ENCODE measurements at regions of chr11 and their contacts with region 1.

Region 1: GRCh38 chr11:4187055-4187988 is 92.7 kb downstream of the RRM1 start:
- DNase-seq: peak; percentile 80
- H3K4me3 Mint-ChIP-seq: peak overlapping the region; percentile 73
- H3K27ac Mint-ChIP-seq: no peak overlapping the region
- H3K4me1 Mint-ChIP-seq: no peaks in the 10 kb centered on the region
- H3K27me3 Mint-ChIP-seq: no peaks in the 10 kb centered on the region
- CTCF ChIP-seq: peak; percentile 99

Region 2: GRCh38 chr11:4480574-4481566 is 293.5 kb after region 1 on chr11:
- CTCF ChIA-PET with region 1: interaction called, 316 read pairs
- POLR2A ChIA-PET with region 1: no interaction called
- intact Hi-C with region 1: no loop called
- DNase-seq: peak; percentile 38
- H3K4me3 Mint-ChIP-seq: no peak overlapping the region
- H3K27ac Mint-ChIP-seq: peak overlapping the region; percentile 57
- H3K4me1 Mint-ChIP-seq: peaks cover 12% of the 10 kb centered on the region
- H3K27me3 Mint-ChIP-seq: no peaks in the 10 kb centered on the region
- CTCF ChIP-seq: no peak

Region 3: DNA sequence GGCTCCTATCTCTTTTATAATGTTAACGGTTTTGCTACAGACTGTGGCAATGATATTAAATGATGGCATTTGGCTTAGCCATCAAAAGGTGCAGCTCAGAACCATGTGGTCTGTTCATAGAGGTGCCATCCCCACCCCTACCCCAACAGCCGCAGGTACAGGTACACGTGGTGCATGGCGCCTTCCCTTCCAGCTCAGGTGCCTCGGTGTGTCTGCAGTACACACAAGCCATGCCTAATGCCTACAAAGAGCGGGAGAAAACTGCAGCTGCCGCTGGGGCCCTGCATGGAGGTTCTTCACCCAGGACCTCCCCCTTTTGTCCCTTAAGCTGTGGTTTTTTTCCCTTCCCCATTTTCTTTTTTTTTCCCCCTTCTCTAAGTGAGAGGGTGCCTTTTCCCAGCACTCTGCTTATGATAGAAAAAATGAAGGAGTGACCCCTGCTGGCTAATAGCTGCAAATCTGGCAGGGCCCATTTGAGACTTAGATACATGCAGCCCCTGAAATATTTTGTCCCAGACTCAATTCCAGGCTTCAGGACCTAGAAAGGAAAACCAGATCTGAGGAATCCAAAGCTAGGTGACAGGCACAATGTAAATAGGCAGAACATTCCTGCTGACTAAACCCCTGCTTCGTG is 364.1 kb after region 1 on chr11:
- CTCF ChIA-PET with region 1: interaction called, 22 read pairs
- POLR2A ChIA-PET with region 1: no interaction called
- intact Hi-C with region 1: loop called (anchors 1 kb)
- DNase-seq: peak; percentile 25
- H3K4me3 Mint-ChIP-seq: no peak overlapping the region
- H3K27ac Mint-ChIP-seq: no peak overlapping the region
- H3K4me1 Mint-ChIP-seq: no peaks in the 10 kb centered on the region
- H3K27me3 Mint-ChIP-seq: no peaks in the 10 kb centered on the region
- CTCF ChIP-seq: peak; percentile 31

Region 4: GRCh38 chr11:4636962-4637661 is 449.8 kb after region 1 on chr11 and contains the start of gene OR51D1:
- CTCF ChIA-PET with region 1: interaction called, 12 read pairs
- POLR2A ChIA-PET with region 1: no interaction called
- intact Hi-C with region 1: no loop called
- DNase-seq: peak; percentile 65
- H3K4me3 Mint-ChIP-seq: no peak within 1 kb of the TSS
- H3K27ac Mint-ChIP-seq: no peak within 1 kb of the TSS
- H3K4me1 Mint-ChIP-seq: no peaks in the 10 kb centered on the region
- H3K27me3 Mint-ChIP-seq: no peaks in the 10 kb centered on the region
- CTCF ChIP-seq: peak; percentile 81
- total RNA-seq, gene OR51D1: not detected in 2 replicates

Region 5: DNA sequence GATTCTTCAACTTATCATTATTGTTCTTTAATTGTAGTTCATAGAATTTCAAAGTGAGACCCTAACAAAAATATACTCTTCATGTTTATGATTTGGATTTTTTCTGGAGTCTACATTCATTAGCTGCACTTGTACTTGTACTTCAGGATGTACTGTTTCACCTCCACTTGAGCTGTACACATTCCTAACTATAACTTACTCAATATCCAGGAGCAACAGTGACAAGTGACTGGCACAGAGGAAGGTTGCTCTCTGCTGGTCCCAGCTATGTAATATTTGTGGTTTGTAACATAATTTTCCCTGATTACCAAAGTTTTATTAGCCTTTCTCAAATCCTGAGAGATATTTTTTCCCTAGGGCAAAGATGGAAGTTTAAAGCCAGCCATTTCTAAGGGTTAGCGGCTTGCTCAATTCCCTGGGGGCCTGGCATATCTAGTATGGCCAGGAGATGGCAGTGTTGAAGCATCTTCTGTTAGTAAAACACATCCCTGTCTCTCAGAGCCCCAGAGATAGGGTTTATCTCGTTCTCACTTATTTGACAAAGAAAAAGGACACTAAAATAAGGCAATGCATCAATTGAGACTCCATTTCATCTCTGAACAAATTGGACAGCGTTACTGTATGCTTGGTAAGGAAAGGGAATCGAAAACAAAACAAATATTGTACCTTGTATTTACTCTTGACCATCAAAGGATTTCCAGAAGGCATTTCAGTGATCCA is 936.6 kb after region 1 on chr11:
- CTCF ChIA-PET with region 1: interaction called, 3 read pairs
- POLR2A ChIA-PET with region 1: no interaction called
- intact Hi-C with region 1: loop called (anchors 1 kb)
- DNase-seq: peak; percentile 74
- H3K4me3 Mint-ChIP-seq: no peak overlapping the region
- H3K27ac Mint-ChIP-seq: no peak overlapping the region
- H3K4me1 Mint-ChIP-seq: no peaks in the 10 kb centered on the region
- H3K27me3 Mint-ChIP-seq: peaks cover 62% of the 10 kb centered on the region
- CTCF ChIP-seq: peak; percentile 80